Right lobe of liver (tissue), 6 donors: ENCODE measurements at regions of chr17 and their contacts with region 1.

Region 1: GRCh38 chr17:55601874-55602364 is 90.7 kb upstream of the SMIM36 start:
- DNase-seq: peak in 1 of 3 donors; percentile 49
- ATAC-seq: peak; percentile 85 to 96 (median 90)
- H3K4me3 ChIP-seq: no peak overlapping the region
- H3K27ac ChIP-seq: no peak overlapping the region
- H3K4me1 ChIP-seq: peaks cover 0 to 2% (median 0%) of the 10 kb centered on the region in 4 donors
- H3K27me3 ChIP-seq: no peaks in the 10 kb centered on the region
- CTCF ChIP-seq: peak; percentile 64 to 96 (median 78)
- POLR2A ChIP-seq: no peak

Region 2: DNA sequence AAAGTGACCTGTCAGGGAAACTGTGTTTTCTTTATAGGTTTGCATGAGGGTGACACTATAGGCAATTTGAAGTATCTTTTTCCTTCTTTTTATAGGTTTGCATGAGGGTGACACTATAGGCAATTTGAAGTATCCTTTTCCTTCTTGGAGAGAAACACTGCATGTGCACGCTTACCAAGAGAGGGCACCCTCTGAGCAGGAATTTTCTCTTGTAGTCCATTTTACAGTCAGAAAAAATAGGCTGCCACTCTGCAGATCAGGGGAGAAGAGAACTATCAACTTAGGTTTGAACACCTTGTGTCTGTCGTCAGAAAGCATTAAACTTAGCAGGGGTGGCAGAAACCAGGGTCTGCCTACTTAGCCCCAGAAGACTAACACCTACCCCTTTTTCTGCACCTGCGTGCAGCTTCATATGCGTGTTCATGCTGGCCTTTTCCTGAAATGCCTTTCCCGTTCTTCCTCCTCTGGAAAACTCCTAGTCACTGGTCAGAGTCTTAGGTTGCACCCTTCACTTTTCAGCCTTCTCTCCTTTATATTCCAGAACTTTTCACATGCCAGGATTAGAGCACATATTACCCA is 74.3 kb before region 1 on chr17:
- intact Hi-C with region 1: loop called in 1 of 2 experiments (anchors 5 kb)
- DNase-seq: peak in 1 of 3 donors; percentile 51
- ATAC-seq: peak; percentile 50 to 74 (median 62)
- H3K4me3 ChIP-seq: no peak overlapping the region
- H3K27ac ChIP-seq: peak overlapping the region in 1 of 3 donors; percentile 10
- H3K4me1 ChIP-seq: peaks cover 0 to 33% (median 15%) of the 10 kb centered on the region in 4 donors
- H3K27me3 ChIP-seq: no peaks in the 10 kb centered on the region
- CTCF ChIP-seq: peak; percentile 69 to 82 (median 76)
- POLR2A ChIP-seq: no peak

Region 3: GRCh38 chr17:55726440-55726839 is 124.5 kb after region 1 on chr17:
- intact Hi-C with region 1: loop called in 1 of 2 experiments (anchors 10 kb)
- DNase-seq: peak; percentile 44 to 77 (median 61)
- ATAC-seq: peak; percentile 59 to 67 (median 63)
- H3K4me3 ChIP-seq: no peak overlapping the region
- H3K27ac ChIP-seq: peak overlapping the region in 1 of 3 donors; percentile 15
- H3K4me1 ChIP-seq: peaks cover 0 to 27% (median 8%) of the 10 kb centered on the region in 4 donors
- H3K27me3 ChIP-seq: no peaks in the 10 kb centered on the region
- CTCF ChIP-seq: no peak
- POLR2A ChIP-seq: no peak